ENCODE measurements at regions of chr16 and their contacts with region 1.

Region 1: DNA sequence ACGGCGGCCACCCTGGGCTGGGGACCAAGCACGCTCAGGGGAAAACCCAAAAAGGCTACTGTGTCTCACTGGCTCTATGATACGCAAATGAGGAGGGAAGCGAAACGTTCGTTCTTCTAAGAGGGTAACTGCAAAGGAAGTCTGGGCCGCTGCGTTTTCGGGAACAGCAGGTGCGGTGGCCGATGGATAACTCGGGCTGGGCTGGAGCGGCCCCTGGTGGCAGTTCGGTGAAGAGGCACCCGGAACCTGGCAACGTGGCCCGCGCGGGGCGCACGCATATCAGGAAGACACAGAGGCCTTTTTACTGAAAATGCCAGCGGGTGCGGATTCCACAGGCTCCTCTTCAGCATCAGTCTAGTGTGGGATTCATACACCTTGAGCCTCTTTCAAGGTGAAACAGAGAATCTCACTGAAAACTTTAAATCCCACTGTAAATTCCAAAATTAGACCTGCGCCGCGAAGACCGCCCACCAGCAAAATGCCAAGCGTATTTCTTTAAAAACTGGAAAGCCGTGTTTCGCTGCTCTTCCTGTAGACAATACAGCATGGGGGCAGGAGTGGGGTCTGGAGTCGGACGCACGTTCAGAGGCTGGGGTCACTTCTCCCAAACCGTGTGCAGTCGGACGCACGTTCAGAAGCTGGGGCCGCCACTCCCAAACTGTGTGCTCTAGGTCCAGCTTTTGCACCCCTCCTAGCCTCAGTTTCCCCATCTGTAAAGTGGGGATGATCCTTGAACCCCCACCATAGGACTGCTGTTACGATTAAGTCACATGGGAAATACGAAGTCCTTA is 44.4 kb upstream of the METTL9 start:
- DNase-seq: peak; percentile 71
- ATAC-seq: peak; percentile 99
- H3K4me3 ChIP-seq: no peak overlapping the region
- H3K27ac ChIP-seq: no peak overlapping the region
- H3K4me1 ChIP-seq: no peaks in the 10 kb centered on the region
- H3K27me3 ChIP-seq: peaks cover 13% of the 10 kb centered on the region
- CTCF ChIP-seq: peak; percentile 98
- POLR2A ChIP-seq: peak; percentile 54; the same call in 1 of the 2 replicates
- RAD21 ChIP-seq: peak; percentile 99

Region 2: DNA sequence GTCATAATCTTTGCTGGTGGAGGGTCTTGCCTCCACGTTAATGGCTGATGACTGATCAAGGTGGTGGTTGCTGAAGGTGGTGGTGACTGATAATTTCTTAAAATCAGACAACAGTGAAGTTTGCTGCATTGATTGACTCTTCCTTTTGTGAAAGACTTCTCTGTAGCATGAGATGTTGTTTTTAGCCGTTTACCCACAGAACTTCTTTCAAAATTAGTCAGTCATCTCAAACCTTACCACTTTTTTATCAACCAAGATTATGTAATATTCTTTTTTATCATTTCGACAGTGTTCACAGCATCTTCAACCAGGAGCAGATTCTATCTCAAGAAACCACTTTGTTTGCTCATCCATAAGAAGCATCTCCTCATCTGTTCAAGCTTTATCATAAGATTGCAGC is 404.1 kb after region 1 on chr16:
- CTCF ChIA-PET with region 1: no interaction called
- POLR2A ChIA-PET with region 1: no interaction called
- dilution Hi-C with region 1: no loop called
- in situ Hi-C with region 1: no loop called
- intact Hi-C with region 1: no loop called
- DNase-seq: no peak
- ATAC-seq: no peak
- H3K4me3 ChIP-seq: no peak overlapping the region
- H3K27ac ChIP-seq: no peak overlapping the region
- H3K4me1 ChIP-seq: peaks cover 2% of the 10 kb centered on the region
- H3K27me3 ChIP-seq: no peaks in the 10 kb centered on the region
- CTCF ChIP-seq: no peak
- POLR2A ChIP-seq: no peak
- RAD21 ChIP-seq: no peak

Region 3: DNA sequence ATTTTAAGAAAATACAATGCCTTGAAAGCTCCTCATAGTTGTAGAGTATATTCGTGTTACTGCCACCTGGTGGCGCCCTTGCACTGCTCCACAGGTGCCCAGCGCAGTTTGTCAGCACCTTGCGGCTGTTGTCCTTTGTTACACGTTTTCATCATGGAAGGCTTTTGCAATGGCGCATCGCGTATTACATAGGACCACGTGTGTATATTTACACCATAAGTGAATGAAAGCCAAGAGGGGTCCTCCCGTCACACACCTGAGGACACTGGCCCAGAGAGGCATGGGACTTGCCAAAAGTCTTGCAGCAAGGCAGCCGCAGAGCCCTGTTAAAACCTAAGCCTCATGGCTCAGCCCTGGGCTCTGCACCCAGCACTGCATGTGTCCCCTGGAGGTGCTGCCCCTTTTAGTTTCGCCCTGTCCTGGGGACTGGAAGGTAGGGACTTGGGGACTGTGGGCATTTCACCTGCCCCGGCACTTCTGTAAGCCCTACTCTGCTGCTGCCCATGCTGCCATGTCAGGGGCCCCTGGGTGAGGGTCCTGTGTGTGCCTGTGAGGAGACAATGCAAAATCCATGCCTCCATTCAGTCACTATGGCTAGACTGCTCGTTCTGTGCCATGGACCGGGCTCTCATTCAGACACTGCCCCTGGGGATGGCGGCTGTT is 766.5 kb after region 1 on chr16:
- CTCF ChIA-PET with region 1: no interaction called
- POLR2A ChIA-PET with region 1: no interaction called
- dilution Hi-C with region 1: no loop called
- in situ Hi-C with region 1: no loop called
- intact Hi-C with region 1: loop called (anchors 5 kb)
- DNase-seq: peak; percentile 70
- ATAC-seq: peak; percentile 79
- H3K4me3 ChIP-seq: no peak overlapping the region
- H3K27ac ChIP-seq: no peak overlapping the region
- H3K4me1 ChIP-seq: no peaks in the 10 kb centered on the region
- H3K27me3 ChIP-seq: no peaks in the 10 kb centered on the region
- CTCF ChIP-seq: peak; percentile 91
- POLR2A ChIP-seq: no peak
- RAD21 ChIP-seq: peak; percentile 95

Measured in IMR-90 (cell line).